B cell (primary cell): ENCODE measurements at regions of chr1 and their contacts with region 1.

Region 1: GRCh38 chr1:7667625-7668218 is 103.4 kb upstream of the VAMP3 start:
- DNase-seq: peak; percentile 82
- ATAC-seq: peak; percentile 86
- H3K4me3 ChIP-seq: no peak overlapping the region
- H3K4me3 Mint-ChIP-seq: no peak overlapping the region
- H3K27ac ChIP-seq: no peak overlapping the region
- H3K27ac Mint-ChIP-seq: no peak overlapping the region
- H3K4me1 ChIP-seq: peaks cover 4 to 12% of the 10 kb centered on the region in 2 donors
- H3K4me1 Mint-ChIP-seq: peaks cover 10% of the 10 kb centered on the region
- H3K27me3 ChIP-seq: peaks cover 0 to 7% (median 2%) of the 10 kb centered on the region in 4 experiments
- H3K27me3 Mint-ChIP-seq: peaks cover 6% of the 10 kb centered on the region
- CTCF ChIP-seq: peak; percentile 99

Region 2: DNA sequence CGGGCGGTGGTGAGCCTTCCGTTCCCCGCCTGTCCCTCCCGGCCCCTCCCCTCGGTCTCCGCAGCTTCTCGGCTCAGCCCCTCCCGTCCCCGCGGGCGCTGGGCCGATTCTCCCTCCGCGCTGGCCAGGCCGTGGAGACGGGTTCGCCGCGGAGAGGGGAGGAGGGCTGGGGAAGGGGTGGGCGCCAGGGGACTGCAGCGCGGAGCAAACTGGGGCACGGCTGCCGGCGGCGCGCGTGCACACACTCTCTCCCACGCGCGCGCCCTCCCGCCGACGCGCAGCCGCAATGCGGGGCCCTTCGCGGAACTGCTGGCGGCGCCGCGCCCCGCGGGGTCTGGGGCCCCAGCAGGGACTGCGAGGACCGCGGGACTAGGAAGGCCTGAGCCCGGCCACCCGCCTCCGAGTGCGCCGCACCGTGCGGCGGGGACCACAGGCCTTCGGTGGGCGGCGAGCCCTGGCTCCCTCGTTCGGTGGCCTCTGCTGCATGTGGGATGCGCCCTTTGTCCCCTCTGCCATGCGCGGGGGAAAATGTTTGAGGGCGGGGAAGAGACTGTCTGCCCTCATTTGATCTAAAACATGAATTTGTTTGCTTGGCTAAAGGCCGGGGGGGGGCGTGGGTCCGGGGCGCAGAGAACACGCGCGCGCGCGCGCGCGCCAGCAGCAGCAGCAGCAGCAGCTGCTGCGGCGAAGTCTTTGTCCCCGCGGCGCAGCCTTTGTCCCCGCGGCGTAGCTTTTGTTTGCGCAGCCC is 12.7 kb after region 1 on chr1:
- CTCF ChIA-PET with region 1: interaction called, 15 read pairs
- POLR2A ChIA-PET with region 1: no interaction called
- intact Hi-C with region 1: no loop called
- DNase-seq: peak; percentile 60
- ATAC-seq: peak; percentile 73
- H3K4me3 ChIP-seq: peak overlapping the region in 4 of 5 experiments; percentile 38 to 64 (median 52)
- H3K4me3 Mint-ChIP-seq: peak overlapping the region; percentile 83
- H3K27ac ChIP-seq: no peak overlapping the region
- H3K27ac Mint-ChIP-seq: peak overlapping the region; percentile 53
- H3K4me1 ChIP-seq: peaks cover 6 to 12% of the 10 kb centered on the region in 2 donors
- H3K4me1 Mint-ChIP-seq: no peaks in the 10 kb centered on the region
- H3K27me3 ChIP-seq: peaks cover 0 to 21% (median 2%) of the 10 kb centered on the region in 4 experiments
- H3K27me3 Mint-ChIP-seq: peaks cover 6% of the 10 kb centered on the region
- CTCF ChIP-seq: no peak

Region 3: GRCh38 chr1:7698641-7699040 is 30.9 kb after region 1 on chr1:
- CTCF ChIA-PET with region 1: interaction called, 13 read pairs
- POLR2A ChIA-PET with region 1: no interaction called
- intact Hi-C with region 1: no loop called
- DNase-seq: no peak
- ATAC-seq: no peak
- H3K4me3 ChIP-seq: no peak overlapping the region
- H3K4me3 Mint-ChIP-seq: no peak overlapping the region
- H3K27ac ChIP-seq: no peak overlapping the region
- H3K27ac Mint-ChIP-seq: no peak overlapping the region
- H3K4me1 ChIP-seq: peaks cover 0 to 3% of the 10 kb centered on the region in 2 donors
- H3K4me1 Mint-ChIP-seq: peaks cover 1% of the 10 kb centered on the region
- H3K27me3 ChIP-seq: peaks cover 0 to 5% (median 2%) of the 10 kb centered on the region in 4 experiments
- H3K27me3 Mint-ChIP-seq: peaks cover 3% of the 10 kb centered on the region
- CTCF ChIP-seq: no peak

Region 4: GRCh38 chr1:7738044-7738443 is 70.3 kb after region 1 on chr1:
- CTCF ChIA-PET with region 1: interaction called, 14 read pairs
- POLR2A ChIA-PET with region 1: no interaction called
- intact Hi-C with region 1: no loop called
- DNase-seq: no peak
- ATAC-seq: no peak
- H3K4me3 ChIP-seq: no peak overlapping the region
- H3K4me3 Mint-ChIP-seq: no peak overlapping the region
- H3K27ac ChIP-seq: no peak overlapping the region
- H3K27ac Mint-ChIP-seq: no peak overlapping the region
- H3K4me1 ChIP-seq: peaks cover 0 to 3% of the 10 kb centered on the region in 2 donors
- H3K4me1 Mint-ChIP-seq: no peaks in the 10 kb centered on the region
- H3K27me3 ChIP-seq: no peaks in the 10 kb centered on the region
- H3K27me3 Mint-ChIP-seq: no peaks in the 10 kb centered on the region
- CTCF ChIP-seq: no peak

Region 5: DNA sequence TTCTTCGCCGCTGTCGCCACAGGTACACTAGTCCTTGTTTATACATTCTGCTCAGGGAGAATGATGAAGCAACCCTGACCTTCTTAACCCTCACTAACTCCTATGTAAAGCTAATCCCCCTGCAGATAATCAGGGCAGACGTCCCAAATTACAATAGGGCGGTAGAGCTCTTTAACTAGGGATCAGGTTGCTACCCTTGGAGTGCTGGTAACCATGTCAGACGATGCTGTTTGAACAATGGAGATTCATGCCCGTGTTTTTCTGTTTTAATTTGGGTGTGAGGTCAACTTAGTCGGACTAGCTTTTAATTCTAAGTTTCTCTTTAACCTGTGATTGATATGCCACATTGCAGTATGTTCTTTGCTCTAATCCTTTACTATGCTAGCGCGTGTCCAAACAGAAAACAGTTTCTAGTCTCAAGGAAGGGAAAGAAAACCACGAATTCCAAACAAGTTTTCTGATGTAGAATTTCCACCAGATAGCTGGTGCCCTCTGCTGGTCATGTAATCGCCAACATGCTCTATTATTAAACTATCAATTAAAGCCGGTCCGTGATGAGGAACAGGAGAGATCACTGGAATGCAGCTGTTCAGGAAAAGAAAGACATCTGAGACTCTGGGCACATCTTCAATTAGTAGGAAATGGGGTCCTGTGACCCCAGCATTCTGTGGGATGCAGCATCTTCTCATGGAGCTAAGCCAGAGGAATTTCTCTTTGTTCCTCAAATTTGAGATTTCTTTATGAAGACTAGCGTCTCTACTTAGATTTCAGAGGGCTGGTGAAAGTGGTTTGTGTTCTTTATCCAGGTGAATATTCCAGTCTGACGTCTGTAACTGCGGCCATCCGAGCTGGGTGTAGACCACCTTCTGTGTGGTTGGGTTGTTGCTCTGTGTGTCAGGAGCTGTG is 85.0 kb after region 1 on chr1:
- CTCF ChIA-PET with region 1: interaction called, 504 read pairs
- POLR2A ChIA-PET with region 1: interaction called, 4 read pairs
- intact Hi-C with region 1: no loop called
- DNase-seq: peak; percentile 70
- ATAC-seq: peak; percentile 41
- H3K4me3 ChIP-seq: no peak overlapping the region
- H3K4me3 Mint-ChIP-seq: peak overlapping the region; percentile 42
- H3K27ac ChIP-seq: no peak overlapping the region
- H3K27ac Mint-ChIP-seq: no peak overlapping the region
- H3K4me1 ChIP-seq: peaks cover 0 to 7% of the 10 kb centered on the region in 2 donors
- H3K4me1 Mint-ChIP-seq: peaks cover 4% of the 10 kb centered on the region
- H3K27me3 ChIP-seq: no peaks in the 10 kb centered on the region
- H3K27me3 Mint-ChIP-seq: no peaks in the 10 kb centered on the region
- CTCF ChIP-seq: peak; percentile 90